ENCODE measurements at regions of chr4 and their contacts with region 1.

Region 1: DNA sequence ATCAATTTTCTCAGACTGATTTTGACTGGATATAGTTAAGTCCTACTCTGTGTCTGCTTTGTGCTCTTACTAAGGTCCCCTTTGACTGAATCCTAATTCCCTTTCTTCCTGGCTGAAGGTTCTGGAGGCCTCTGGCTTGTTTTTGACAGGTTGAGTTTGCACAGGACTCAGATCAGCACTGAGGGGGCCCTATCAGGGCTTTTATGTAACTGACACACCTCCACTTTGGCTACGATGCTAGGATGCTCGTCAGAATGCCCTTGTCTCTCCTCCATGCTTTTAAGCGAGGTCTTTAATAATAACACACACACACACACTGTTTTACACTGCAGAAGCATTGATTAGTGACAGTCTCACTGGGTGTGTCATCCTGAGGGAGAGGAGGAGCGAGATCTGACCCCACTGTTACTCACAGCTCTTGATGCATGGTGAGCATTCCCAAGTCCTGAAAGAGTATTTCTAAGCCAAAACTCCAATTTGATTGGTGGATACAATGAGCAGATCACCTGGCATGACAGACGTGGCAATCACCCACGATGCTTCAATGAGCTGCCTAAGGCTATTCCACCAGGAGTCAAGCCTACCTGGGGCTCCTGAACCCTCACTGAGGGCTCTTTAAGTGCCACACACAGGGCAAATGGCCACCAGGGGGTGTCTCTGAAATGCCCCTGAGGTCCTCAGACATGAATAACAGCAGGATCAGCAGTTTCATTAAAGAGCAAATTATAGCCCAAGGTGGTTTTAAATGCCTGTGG is 130.4 kb upstream of the CPEB2 start:
- DNase-seq: peak; percentile 38
- H3K4me3 Mint-ChIP-seq: no peak overlapping the region
- H3K27ac Mint-ChIP-seq: no peak overlapping the region
- H3K4me1 Mint-ChIP-seq: peaks cover 8% of the 10 kb centered on the region
- H3K27me3 Mint-ChIP-seq: no peaks in the 10 kb centered on the region

Region 2: DNA sequence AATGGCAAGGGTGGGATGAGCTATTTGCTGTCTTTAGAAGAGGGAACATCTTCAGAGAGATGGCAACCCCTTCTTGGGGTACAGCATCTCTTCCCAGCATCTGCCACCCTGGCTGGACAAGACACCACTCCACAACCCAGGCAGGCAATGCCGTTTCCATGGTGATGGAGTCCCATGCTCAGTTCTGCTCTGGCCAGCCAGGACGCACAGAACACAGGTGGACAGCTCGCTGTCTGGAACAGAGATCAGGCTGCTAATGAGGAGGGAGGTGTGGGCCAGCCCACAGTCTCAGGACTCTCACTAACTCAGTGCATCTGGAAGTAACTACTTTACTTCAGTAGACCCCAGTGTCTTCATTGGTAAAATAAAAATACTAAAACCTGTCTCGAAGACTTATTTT is 190.5 kb before region 1 on chr4:
- CTCF ChIA-PET with region 1: no interaction called
- intact Hi-C with region 1: no loop called
- DNase-seq: no peak
- H3K4me3 Mint-ChIP-seq: no peak overlapping the region
- H3K27ac Mint-ChIP-seq: no peak overlapping the region
- H3K4me1 Mint-ChIP-seq: no peaks in the 10 kb centered on the region
- H3K27me3 Mint-ChIP-seq: peaks cover 15% of the 10 kb centered on the region

Region 3: GRCh38 chr4:14920759-14921320 is 49.0 kb after region 1 on chr4:
- CTCF ChIA-PET with region 1: interaction called, 3 read pairs
- intact Hi-C with region 1: loop called (anchors 5 kb)
- DNase-seq: peak; percentile 35
- H3K4me3 Mint-ChIP-seq: no peak overlapping the region
- H3K27ac Mint-ChIP-seq: no peak overlapping the region
- H3K4me1 Mint-ChIP-seq: no peaks in the 10 kb centered on the region
- H3K27me3 Mint-ChIP-seq: peaks cover 9% of the 10 kb centered on the region

Measured in activated naive CD4-positive, alpha-beta T cell treated with anti-CD3 and anti-CD28 coated beads for 36 hours (primary cell).